ENCODE measurements at regions of chr1 and their contacts with region 1.

Region 1: GRCh38 chr1:71521655-71522264 is 440.9 kb upstream of the ZRANB2 start:
- DNase-seq: no peak
- ATAC-seq: peak; percentile 70
- H3K4me3 ChIP-seq: no peak overlapping the region
- H3K27ac ChIP-seq: no peak overlapping the region
- H3K4me1 ChIP-seq: no peaks in the 10 kb centered on the region
- H3K27me3 ChIP-seq: no peaks in the 10 kb centered on the region
- CTCF ChIP-seq: peak; percentile 40 to 61 (median 43); a peak in 5 of 6 replicates
- EP300 ChIP-seq: no peak
- POLR2A ChIP-seq: no peak
- RAD21 ChIP-seq: peak; percentile 48

Region 2: DNA sequence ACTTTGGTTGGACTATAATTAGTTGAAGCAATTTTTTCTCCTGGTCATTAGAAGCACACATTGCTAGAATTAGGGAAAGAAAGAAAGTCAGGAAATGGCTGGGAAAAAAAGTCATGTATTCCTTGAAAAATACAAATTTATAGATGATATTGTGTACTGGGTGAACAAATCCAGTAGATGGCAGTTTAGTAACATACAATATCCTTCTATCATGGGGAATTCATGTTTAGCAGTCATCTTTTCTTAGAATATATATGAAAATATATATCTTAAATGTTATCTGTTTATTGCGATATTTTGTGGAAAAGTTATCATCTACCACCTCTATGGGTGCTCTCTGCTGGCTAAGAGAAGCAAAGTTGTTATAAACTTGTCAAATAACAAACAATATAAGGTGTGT is 427.8 kb before region 1 on chr1:
- CTCF ChIA-PET with region 1: interaction called, 7 read pairs
- POLR2A ChIA-PET with region 1: no interaction called
- RAD21 ChIA-PET with region 1: no interaction called
- SMC1A ChIA-PET with region 1: no interaction called
- in situ Hi-C with region 1: no loop called
- intact Hi-C with region 1: loop called (anchors 5 kb)
- DNase-seq: no peak
- ATAC-seq: no peak
- H3K4me3 ChIP-seq: no peak overlapping the region
- H3K27ac ChIP-seq: no peak overlapping the region
- H3K4me1 ChIP-seq: no peaks in the 10 kb centered on the region
- H3K27me3 ChIP-seq: no peaks in the 10 kb centered on the region
- CTCF ChIP-seq: peak in 1 of 3 experiments; percentile 14; a peak in 2 of 6 replicates
- EP300 ChIP-seq: no peak
- POLR2A ChIP-seq: no peak
- RAD21 ChIP-seq: peak; percentile 32; the same call in 1 of the 2 replicates

Region 3: GRCh38 chr1:71196685-71197084 is 325.1 kb before region 1 on chr1:
- CTCF ChIA-PET with region 1: interaction called, 5 read pairs
- POLR2A ChIA-PET with region 1: no interaction called
- RAD21 ChIA-PET with region 1: interaction called, 3 read pairs
- SMC1A ChIA-PET with region 1: interaction called, 3 read pairs
- in situ Hi-C with region 1: no loop called
- intact Hi-C with region 1: loop called (anchors 5 kb)
- DNase-seq: no peak
- ATAC-seq: no peak
- H3K4me3 ChIP-seq: no peak overlapping the region
- H3K27ac ChIP-seq: no peak overlapping the region
- H3K4me1 ChIP-seq: no peaks in the 10 kb centered on the region
- H3K27me3 ChIP-seq: no peaks in the 10 kb centered on the region
- CTCF ChIP-seq: no peak; a peak in 1 of 6 replicates
- EP300 ChIP-seq: no peak
- POLR2A ChIP-seq: no peak
- RAD21 ChIP-seq: no peak

Region 4: DNA sequence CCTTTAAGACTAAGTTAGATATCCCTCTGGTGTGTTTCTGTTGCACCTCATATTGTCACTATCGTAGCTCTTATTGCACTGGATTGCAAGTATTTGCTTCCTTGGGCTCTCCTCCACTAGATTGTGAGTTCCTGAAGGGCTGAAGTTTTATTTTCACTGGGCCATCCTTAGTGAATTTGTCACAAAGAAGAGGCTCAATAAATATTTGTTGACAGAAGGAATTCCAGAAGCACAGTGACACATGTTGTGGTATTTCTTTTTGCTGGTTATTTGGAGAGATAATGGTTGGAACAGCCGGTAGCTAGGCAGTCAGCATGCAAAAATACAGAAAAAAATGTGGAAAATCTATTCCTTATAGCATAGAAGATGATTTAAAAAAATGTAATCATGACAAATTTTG is 311.0 kb before region 1 on chr1:
- CTCF ChIA-PET with region 1: no interaction called
- POLR2A ChIA-PET with region 1: no interaction called
- RAD21 ChIA-PET with region 1: no interaction called
- SMC1A ChIA-PET with region 1: no interaction called
- in situ Hi-C with region 1: no loop called
- intact Hi-C with region 1: no loop called
- DNase-seq: no peak
- ATAC-seq: no peak
- H3K4me3 ChIP-seq: no peak overlapping the region
- H3K27ac ChIP-seq: no peak overlapping the region
- H3K4me1 ChIP-seq: no peaks in the 10 kb centered on the region
- H3K27me3 ChIP-seq: no peaks in the 10 kb centered on the region
- CTCF ChIP-seq: no peak
- EP300 ChIP-seq: no peak
- POLR2A ChIP-seq: no peak
- RAD21 ChIP-seq: no peak

Measured in GM12878 (cell line).